Dorsolateral prefrontal cortex (tissue), 120 donors: ENCODE measurements at regions of chr4 and their contacts with region 1.

Region 1: GRCh38 chr4:164977243-164978164 is at the start of gene TRIM61:
- DNase-seq: peak in 4 of 10 donors; percentile 20 to 55 (median 44)
- H3K4me3 ChIP-seq: peak within 1 kb of the TSS in 55 of 59 donors; percentile 1 to 67 (median 47)
- H3K27ac ChIP-seq: peak within 1 kb of the TSS in 2 of 59 donors; percentile 35 to 36
- H3K27me3 ChIP-seq: no peaks in the 10 kb centered on the region
- CTCF ChIP-seq: peak in 1 of 56 donors; percentile 10
- total RNA-seq, gene TRIM61: 0.28 to 2.1 (median 0.72) TPM in 97 of 120 experiments, not detected in the others

Region 2: GRCh38 chr4:164138521-164138920 is 839.0 kb before region 1 on chr4:
- intact Hi-C with region 1: no loop called
- DNase-seq: no peak
- H3K4me3 ChIP-seq: no peak overlapping the region
- H3K27ac ChIP-seq: peak overlapping the region in 2 of 59 donors; percentile 6
- H3K27me3 ChIP-seq: no peaks in the 10 kb centered on the region
- CTCF ChIP-seq: no peak

Region 3: DNA sequence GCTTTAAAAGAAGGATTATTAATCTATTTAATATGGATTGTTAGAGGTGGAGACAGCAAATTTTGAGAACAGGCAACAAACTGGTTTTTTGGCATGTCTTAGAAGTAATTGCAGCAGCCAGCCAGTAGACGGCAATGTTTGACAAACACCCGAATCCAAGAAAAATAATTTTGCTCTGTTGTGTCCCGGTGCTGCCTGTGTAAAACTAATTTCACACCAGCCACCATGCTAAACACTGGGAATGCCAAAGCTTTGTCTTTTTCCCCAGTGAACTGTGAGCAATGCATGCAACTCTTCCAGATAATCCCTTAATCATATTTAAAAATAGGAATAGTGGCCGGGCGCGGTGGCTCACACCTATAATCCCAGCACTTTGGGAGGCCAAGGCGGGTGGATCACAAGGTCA is 197.7 kb before region 1 on chr4:
- intact Hi-C with region 1: no loop called
- DNase-seq: peak in 1 of 10 donors; percentile 43
- H3K4me3 ChIP-seq: no peak overlapping the region
- H3K27ac ChIP-seq: no peak overlapping the region
- H3K27me3 ChIP-seq: no peaks in the 10 kb centered on the region
- CTCF ChIP-seq: peak; percentile 44 to 86 (median 74)

Region 4: GRCh38 chr4:165048170-165048569 is 70.7 kb after region 1 on chr4:
- intact Hi-C with region 1: no loop called
- DNase-seq: no peak
- H3K4me3 ChIP-seq: no peak overlapping the region
- H3K27ac ChIP-seq: no peak overlapping the region
- H3K27me3 ChIP-seq: peaks cover 0 to 4% (median 0%) of the 10 kb centered on the region in 45 donors
- CTCF ChIP-seq: no peak

Region 5: GRCh38 chr4:165060942-165061341 is 83.4 kb after region 1 on chr4:
- intact Hi-C with region 1: loop called in 1 of 2 experiments (anchors 5 kb)
- DNase-seq: no peak
- H3K4me3 ChIP-seq: no peak overlapping the region
- H3K27ac ChIP-seq: no peak overlapping the region
- H3K27me3 ChIP-seq: no peaks in the 10 kb centered on the region
- CTCF ChIP-seq: peak in 55 of 56 donors; percentile 18 to 65 (median 48)